ENCODE measurements at regions of chr1 and their contacts with region 1.

Region 1: GRCh38 chr1:147172168-147172992 is at the start of gene PRKAB2:
- DNase-seq: peak; percentile 89 to 98
- H3K4me3 ChIP-seq: peak within 1 kb of the TSS; percentile 74 to 96 (median 88)
- H3K27ac ChIP-seq: peak within 1 kb of the TSS; percentile 75
- H3K4me1 ChIP-seq: peaks cover 2 to 12% (median 10%) of the 10 kb centered on the region in 4 experiments; a peak in 4 of 7 replicates
- H3K27me3 ChIP-seq: no peaks in the 10 kb centered on the region
- CTCF ChIP-seq: peak; percentile 77 to 94 (median 83)
- EP300 ChIP-seq: peak in 1 of 2 experiments; percentile 81; a peak in 1 of 3 replicates
- POLR2A ChIP-seq: peak; percentile 59 to 69; a peak in 2 of 3 replicates
- RAD21 ChIP-seq: peak; percentile 66 to 81
- total RNA-seq, gene PRKAB2: 18.9 and 19.8 TPM in 2 replicates

Region 2: GRCh38 chr1:147162093-147162492 is 10.3 kb before region 1 on chr1:
- CTCF ChIA-PET with region 1: interaction called, 3 read pairs
- POLR2A ChIA-PET with region 1: interaction called, 14 read pairs
- DNase-seq: no peak
- H3K4me3 ChIP-seq: no peak overlapping the region
- H3K27ac ChIP-seq: no peak overlapping the region
- H3K4me1 ChIP-seq: no peaks in the 10 kb centered on the region
- H3K27me3 ChIP-seq: no peaks in the 10 kb centered on the region
- CTCF ChIP-seq: no peak
- EP300 ChIP-seq: no peak
- POLR2A ChIP-seq: no peak
- RAD21 ChIP-seq: no peak

Region 3: DNA sequence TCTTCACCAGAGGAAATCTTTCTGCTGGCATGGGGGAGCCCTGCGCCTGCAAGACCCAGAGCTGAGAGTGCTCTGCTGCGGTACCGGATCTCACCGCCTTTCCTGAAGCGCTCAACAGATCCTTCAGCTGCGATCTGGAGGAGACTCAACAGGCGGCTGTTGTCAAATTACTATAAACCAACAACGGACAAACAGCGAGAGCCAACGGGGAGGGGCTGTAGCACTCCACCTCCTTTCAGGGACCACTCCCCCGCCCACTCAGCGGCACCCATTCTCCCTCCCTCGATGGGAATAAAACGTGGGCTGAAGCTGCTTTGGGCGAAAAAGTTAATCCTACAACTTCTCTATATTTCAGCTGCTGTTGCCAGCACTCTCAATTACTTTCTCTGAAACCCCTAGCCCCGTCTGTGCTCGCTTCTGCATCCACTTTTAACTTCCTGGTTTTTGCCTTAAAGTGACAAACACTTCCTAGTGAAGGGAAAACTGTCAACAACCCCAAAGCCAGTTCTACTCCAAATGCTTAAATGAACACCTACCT is 52.9 kb after region 1 on chr1 and contains the start of gene FMO5:
- CTCF ChIA-PET with region 1: interaction called, 10 read pairs
- POLR2A ChIA-PET with region 1: interaction called, 4 read pairs
- DNase-seq: peak; percentile 44 to 65
- H3K4me3 ChIP-seq: peak within 1 kb of the TSS; percentile 55 to 82 (median 76)
- H3K27ac ChIP-seq: no peak within 1 kb of the TSS
- H3K4me1 ChIP-seq: peaks cover 0 to 6% (median 4%) of the 10 kb centered on the region in 4 experiments; a peak in 4 of 7 replicates
- H3K27me3 ChIP-seq: peaks cover 0 to 3% (median 0%) of the 10 kb centered on the region in 4 experiments; a peak in 2 of 7 replicates
- CTCF ChIP-seq: peak in 1 of 3 experiments; percentile 12; a peak in 1 of 4 replicates
- EP300 ChIP-seq: no peak
- POLR2A ChIP-seq: no peak
- RAD21 ChIP-seq: no peak
- total RNA-seq, gene FMO5: 0.34 TPM in 2 replicates

Region 4: DNA sequence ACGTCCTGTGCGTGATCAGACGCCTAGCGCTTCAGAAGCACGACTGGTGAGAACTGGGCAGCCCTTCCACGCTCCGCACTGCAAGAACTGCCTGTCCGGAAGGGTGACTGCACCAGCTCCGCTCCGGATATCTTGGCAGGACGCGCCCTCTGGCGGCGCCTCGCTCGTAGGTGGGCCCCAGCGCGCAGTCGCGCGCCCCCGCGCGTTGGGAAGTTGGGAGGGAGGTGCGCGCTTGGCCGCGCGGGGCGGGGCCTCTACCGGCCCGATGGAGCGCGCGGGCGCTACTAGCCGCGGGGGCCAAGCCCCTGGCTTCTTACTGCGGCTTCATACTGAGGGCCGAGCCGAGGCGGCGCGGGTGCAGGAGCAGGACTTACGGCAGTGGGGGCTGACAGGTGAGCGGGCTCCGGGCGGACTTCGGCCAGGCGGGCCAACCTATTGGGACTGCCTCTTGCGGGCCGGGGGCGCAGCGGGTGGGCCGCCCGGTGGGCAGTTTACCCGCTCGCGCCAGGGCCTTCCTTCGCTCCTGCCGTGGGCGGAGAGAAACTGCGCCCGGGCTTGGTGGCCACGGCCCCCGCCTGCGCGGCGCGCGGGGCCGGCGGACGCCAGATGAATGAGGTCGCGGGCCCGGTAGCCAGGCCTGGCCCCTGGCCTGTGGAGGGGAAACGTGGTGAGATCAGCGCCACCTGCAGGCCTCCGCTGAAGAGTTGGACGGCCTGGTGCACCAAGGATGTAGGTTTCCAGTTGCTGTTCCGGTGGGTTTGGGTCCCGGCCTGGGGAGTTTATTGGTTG is 70.3 kb after region 1 on chr1 and contains the start of gene CHD1L:
- CTCF ChIA-PET with region 1: interaction called, 22 read pairs
- POLR2A ChIA-PET with region 1: interaction called, 18 read pairs
- DNase-seq: peak; percentile 80 to 93
- H3K4me3 ChIP-seq: peak within 1 kb of the TSS; percentile 53 to 98 (median 85)
- H3K27ac ChIP-seq: peak within 1 kb of the TSS; percentile 76; the same call in 1 of the 2 replicates
- H3K4me1 ChIP-seq: peaks cover 0 to 16% (median 2%) of the 10 kb centered on the region in 4 experiments; a peak in 4 of 7 replicates
- H3K27me3 ChIP-seq: no peaks in the 10 kb centered on the region
- CTCF ChIP-seq: peak; percentile 94 to 100 (median 96)
- EP300 ChIP-seq: no peak; a peak in 1 of 3 replicates
- POLR2A ChIP-seq: peak in 1 of 2 experiments; percentile 73; a peak in 2 of 3 replicates
- RAD21 ChIP-seq: peak; percentile 91 to 97
- total RNA-seq, gene CHD1L: 49.9 and 51.2 TPM in 2 replicates